ENCODE measurements at regions of chr6 and their contacts with region 1.

Region 1: GRCh38 chr6:27177485-27178406 is 69.8 kb upstream of the PRSS16 start:
- DNase-seq: peak in 1 of 2 donors; percentile 93
- H3K4me3 ChIP-seq: peak overlapping the region; percentile 59 to 64
- H3K27ac ChIP-seq: peak overlapping the region; percentile 74
- H3K4me1 ChIP-seq: no peaks in the 10 kb centered on the region
- H3K27me3 ChIP-seq: no peaks in the 10 kb centered on the region
- CTCF ChIP-seq: peak in 1 of 3 experiments; percentile 10
- POLR2A ChIP-seq: no peak

Region 2: GRCh38 chr6:27205375-27206278 is 27.9 kb after region 1 on chr6:
- intact Hi-C with region 1: no loop called
- DNase-seq: no peak
- H3K4me3 ChIP-seq: no peak overlapping the region
- H3K27ac ChIP-seq: no peak overlapping the region
- H3K4me1 ChIP-seq: no peaks in the 10 kb centered on the region
- H3K27me3 ChIP-seq: no peaks in the 10 kb centered on the region
- CTCF ChIP-seq: no peak
- POLR2A ChIP-seq: no peak

Region 3: DNA sequence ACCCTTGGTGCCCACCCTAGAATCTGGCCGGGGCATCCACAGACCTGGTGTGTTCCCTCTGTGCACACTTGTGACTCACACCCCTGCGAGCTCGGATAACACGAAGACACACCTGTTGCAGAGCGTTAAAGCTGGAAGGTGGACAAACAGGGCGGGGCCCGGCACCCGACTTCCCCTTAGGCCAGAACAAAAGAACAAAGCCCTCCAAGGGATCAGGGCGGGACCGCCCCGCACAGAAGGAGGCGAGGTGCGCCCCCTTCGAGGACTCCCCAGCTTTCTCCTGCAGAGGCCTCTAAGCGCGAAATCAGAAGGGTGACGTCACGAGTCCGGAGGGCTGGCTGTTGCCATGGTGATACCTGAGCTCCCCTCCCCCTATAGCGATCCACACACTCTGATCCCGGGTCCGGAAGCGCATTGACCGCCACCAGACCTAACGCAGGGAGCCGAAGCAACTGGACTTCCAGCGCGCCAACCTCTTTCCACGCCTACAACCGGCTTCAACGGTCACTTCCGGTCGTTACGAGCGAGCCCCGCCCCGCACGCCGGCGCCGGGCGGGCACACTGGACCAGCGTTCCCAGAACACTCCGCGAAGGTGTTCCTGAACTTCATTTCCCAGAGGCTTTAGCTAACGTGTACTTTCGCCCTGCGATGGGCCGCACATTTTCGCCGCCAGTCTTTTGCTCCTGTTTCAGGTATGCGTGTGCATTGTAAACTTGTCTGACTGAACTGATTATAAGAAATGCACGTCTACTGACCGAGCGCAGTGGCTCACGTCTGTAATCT is 295.1 kb after region 1 on chr6 and contains the start of gene ZNF184:
- intact Hi-C with region 1: loop called (anchors 10 kb)
- DNase-seq: peak in 1 of 2 donors; percentile 96
- H3K4me3 ChIP-seq: peak within 1 kb of the TSS; percentile 68 to 97
- H3K27ac ChIP-seq: peak within 1 kb of the TSS; percentile 86
- H3K4me1 ChIP-seq: peaks cover 37% of the 10 kb centered on the region
- H3K27me3 ChIP-seq: no peaks in the 10 kb centered on the region
- CTCF ChIP-seq: peak in 1 of 3 experiments; percentile 4
- POLR2A ChIP-seq: peak in 1 of 2 donors; percentile 51
- total RNA-seq, gene ZNF184: 4.4 TPM

Region 4: DNA sequence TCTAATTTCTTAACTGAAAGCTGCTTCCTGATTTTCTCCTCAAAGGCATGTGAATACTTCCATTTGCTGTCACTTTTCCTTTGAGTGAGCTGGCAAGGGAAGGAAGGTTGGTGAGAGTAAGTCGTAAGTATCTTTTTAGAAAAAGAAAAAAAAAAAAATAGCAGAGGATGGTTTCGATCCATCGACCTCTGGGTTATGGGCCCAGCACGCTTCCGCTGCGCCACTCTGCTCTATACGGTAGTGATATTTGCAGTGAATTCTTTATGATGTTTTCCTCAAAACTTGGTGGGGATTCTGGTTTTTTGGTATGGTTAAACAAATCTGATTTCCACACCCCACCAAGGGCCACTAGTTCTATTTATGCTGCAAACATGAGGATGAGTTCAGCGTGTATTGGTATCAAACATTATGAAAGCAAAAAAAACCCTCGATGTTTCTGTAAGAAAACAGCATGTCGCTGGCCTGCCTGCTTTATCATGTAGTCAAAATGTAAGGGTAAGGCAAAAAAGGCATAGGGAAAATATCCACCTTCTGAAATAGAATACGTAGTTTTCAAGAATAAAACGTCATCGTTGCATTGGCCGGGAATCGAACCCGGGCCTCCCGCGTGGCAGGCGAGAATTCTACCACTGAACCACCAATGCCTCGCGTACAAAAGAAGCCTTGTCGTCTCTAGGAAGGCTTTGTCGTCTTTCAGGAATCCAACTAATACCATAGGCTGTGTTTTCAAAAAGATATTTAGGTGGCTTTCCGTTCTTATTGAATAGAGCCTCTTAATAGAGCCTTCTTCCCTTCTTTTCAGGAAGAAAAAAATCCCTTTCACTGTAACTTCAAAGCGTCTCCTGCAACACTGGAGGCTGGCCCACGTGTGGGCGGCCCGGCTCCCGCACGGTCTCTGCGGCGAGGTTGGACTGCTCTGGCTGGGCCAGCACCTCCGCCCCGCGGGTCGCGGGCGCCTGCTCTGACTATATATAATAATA is 724.9 kb after region 1 on chr6:
- intact Hi-C with region 1: loop called (anchors 5 kb)
- DNase-seq: no peak
- H3K4me3 ChIP-seq: peak overlapping the region; percentile 48 to 54
- H3K27ac ChIP-seq: peak overlapping the region; percentile 71
- H3K4me1 ChIP-seq: peaks cover 6% of the 10 kb centered on the region
- H3K27me3 ChIP-seq: no peaks in the 10 kb centered on the region
- CTCF ChIP-seq: no peak
- POLR2A ChIP-seq: no peak

Region 5: GRCh38 chr6:28981833-28982475 is 1804.2 kb after region 1 on chr6:
- intact Hi-C with region 1: loop called (anchors 5 kb)
- DNase-seq: peak in 1 of 2 donors; percentile 93
- H3K4me3 ChIP-seq: peak overlapping the region; percentile 56 to 64
- H3K27ac ChIP-seq: peak overlapping the region; percentile 86
- H3K4me1 ChIP-seq: peaks cover 14% of the 10 kb centered on the region
- H3K27me3 ChIP-seq: no peaks in the 10 kb centered on the region
- CTCF ChIP-seq: no peak
- POLR2A ChIP-seq: no peak